B cell (primary cell): ENCODE measurements at regions of chrX and their contacts with region 1.

Region 1: DNA sequence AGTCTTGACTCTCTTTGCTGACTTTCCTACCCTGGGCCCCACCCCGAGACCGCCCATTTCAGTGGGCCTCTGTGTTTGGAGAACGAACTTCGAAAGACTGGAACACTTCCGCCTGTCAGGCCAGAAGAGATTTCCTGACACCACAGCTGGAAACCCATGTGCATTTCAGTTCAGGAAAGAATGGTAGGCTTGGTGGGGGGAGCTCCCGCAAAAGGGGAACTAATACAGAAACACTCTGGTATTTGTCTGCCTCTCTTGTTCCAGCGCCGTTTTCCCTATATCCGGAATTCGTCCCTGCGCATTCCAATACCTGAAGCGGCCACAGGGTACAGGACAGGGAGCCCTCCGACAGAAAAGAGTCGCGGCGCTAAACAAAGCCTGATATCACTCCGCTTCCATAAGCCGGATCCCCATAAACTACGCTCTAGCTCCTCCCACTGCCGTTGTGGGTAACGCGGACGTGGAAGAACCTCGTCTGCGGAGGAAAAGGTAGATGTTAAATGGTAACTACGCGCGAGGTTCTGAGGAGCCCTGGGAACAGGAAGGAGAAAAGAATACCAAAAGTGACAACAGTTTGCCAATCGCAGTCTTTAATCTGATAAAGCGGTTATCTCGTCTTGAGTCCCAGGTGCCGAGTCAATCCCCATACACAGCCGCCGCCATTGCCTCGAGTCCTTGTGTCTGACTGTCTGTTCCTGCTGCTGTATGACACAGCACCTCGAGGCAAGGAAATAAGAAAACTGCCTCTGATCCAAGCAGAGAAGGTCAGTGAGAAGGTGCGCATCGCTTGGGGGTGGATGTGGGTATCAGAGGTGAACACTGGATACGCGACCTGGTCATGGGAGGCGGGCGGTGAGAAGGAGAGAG is at the start of gene ARMCX5:
- DNase-seq: peak; percentile 79
- ATAC-seq: peak; percentile 85
- H3K4me3 ChIP-seq: peak within 1 kb of the TSS; percentile 64 to 70 (median 69)
- H3K4me3 Mint-ChIP-seq: peak within 1 kb of the TSS; percentile 100
- H3K27ac ChIP-seq: peak within 1 kb of the TSS; percentile 53 to 70
- H3K27ac Mint-ChIP-seq: peak within 1 kb of the TSS; percentile 98
- H3K4me1 ChIP-seq: peaks cover 12 to 14% of the 10 kb centered on the region in 2 donors
- H3K4me1 Mint-ChIP-seq: peaks cover 34% of the 10 kb centered on the region
- H3K27me3 ChIP-seq: no peaks in the 10 kb centered on the region
- H3K27me3 Mint-ChIP-seq: no peaks in the 10 kb centered on the region
- CTCF ChIP-seq: no peak
- total RNA-seq, gene ARMCX5: 12.4 and 12.5 TPM in 2 replicates

Region 2: GRCh38 chrX:102652031-102652688 is 52.8 kb after region 1 on chrX:
- CTCF ChIA-PET with region 1: no interaction called
- POLR2A ChIA-PET with region 1: no interaction called
- intact Hi-C with region 1: loop called (anchors 1 kb)
- DNase-seq: peak; percentile 62
- ATAC-seq: peak; percentile 57
- H3K4me3 ChIP-seq: peak overlapping the region; percentile 16 to 71 (median 64)
- H3K4me3 Mint-ChIP-seq: peak overlapping the region; percentile 87
- H3K27ac ChIP-seq: peak overlapping the region; percentile 34 to 51
- H3K27ac Mint-ChIP-seq: peak overlapping the region; percentile 89
- H3K4me1 ChIP-seq: no peaks in the 10 kb centered on the region
- H3K4me1 Mint-ChIP-seq: peaks cover 16% of the 10 kb centered on the region
- H3K27me3 ChIP-seq: no peaks in the 10 kb centered on the region
- H3K27me3 Mint-ChIP-seq: no peaks in the 10 kb centered on the region
- CTCF ChIP-seq: peak; percentile 37